ENCODE measurements at regions of chr6 and their contacts with region 1.

Region 1: DNA sequence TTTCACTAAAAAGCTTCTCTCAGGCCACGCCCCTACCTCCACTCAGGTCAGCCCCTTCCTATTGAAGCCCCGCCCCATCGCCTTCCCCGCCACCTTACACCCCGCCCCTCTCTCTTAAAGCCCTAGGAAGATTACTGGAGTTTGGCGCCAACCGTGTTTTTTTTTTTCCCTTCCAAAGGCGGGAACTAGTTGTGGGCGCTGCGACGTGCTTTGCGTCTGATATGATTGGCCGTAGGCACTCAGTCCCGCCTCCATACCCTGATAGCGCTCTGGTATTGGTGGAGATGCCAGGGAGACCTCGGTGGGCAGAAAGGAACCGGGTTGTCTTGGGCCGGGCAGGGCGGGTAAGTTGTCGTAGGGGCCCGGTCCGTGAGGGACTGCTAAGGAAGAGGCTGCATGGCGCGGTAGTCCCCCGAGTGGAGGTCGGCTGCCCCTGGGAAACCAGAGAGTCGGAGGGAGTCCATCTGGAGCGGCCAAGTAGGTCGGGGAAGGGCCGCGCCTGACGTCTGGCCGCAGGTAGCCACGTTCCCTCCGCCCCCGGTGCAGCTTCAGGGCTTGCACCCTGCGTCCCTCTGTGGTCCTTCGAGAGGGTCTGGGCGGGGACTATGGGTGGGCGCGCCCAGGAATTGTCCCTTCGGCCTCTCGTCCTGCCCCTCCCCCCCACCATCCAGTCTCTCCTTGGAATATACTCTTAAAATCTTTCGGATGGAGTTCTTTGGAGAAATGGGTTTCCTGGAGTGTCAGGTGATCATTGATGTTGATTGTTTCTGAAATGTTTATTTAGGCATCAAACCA is at the start of gene CASP8AP2:
- DNase-seq: peak; percentile 98
- H3K4me3 Mint-ChIP-seq: peak within 1 kb of the TSS; percentile 99
- H3K27ac Mint-ChIP-seq: peak within 1 kb of the TSS; percentile 96
- H3K4me1 Mint-ChIP-seq: peaks cover 33% of the 10 kb centered on the region
- H3K27me3 Mint-ChIP-seq: no peaks in the 10 kb centered on the region
- total RNA-seq, gene CASP8AP2: 27.4 to 30.2 TPM

Region 2: GRCh38 chr6:88963139-88964090 is 866.4 kb before region 1 on chr6 and contains the start of gene RNGTT:
- CTCF ChIA-PET with region 1: no interaction called
- intact Hi-C with region 1: loop called (anchors 10 kb)
- DNase-seq: peak; percentile 99
- H3K4me3 Mint-ChIP-seq: peak within 1 kb of the TSS; percentile 99
- H3K27ac Mint-ChIP-seq: peak within 1 kb of the TSS; percentile 87
- H3K4me1 Mint-ChIP-seq: peaks cover 34% of the 10 kb centered on the region
- H3K27me3 Mint-ChIP-seq: no peaks in the 10 kb centered on the region
- total RNA-seq, gene RNGTT: 21.7 to 23.5 TPM

Region 3: GRCh38 chr6:89360415-89360999 is 469.3 kb before region 1 on chr6:
- CTCF ChIA-PET with region 1: no interaction called
- intact Hi-C with region 1: loop called (anchors 2 kb)
- DNase-seq: no peak
- H3K4me3 Mint-ChIP-seq: no peak overlapping the region
- H3K27ac Mint-ChIP-seq: peak overlapping the region; percentile 67
- H3K4me1 Mint-ChIP-seq: peaks cover 61% of the 10 kb centered on the region
- H3K27me3 Mint-ChIP-seq: no peaks in the 10 kb centered on the region

Region 4: DNA sequence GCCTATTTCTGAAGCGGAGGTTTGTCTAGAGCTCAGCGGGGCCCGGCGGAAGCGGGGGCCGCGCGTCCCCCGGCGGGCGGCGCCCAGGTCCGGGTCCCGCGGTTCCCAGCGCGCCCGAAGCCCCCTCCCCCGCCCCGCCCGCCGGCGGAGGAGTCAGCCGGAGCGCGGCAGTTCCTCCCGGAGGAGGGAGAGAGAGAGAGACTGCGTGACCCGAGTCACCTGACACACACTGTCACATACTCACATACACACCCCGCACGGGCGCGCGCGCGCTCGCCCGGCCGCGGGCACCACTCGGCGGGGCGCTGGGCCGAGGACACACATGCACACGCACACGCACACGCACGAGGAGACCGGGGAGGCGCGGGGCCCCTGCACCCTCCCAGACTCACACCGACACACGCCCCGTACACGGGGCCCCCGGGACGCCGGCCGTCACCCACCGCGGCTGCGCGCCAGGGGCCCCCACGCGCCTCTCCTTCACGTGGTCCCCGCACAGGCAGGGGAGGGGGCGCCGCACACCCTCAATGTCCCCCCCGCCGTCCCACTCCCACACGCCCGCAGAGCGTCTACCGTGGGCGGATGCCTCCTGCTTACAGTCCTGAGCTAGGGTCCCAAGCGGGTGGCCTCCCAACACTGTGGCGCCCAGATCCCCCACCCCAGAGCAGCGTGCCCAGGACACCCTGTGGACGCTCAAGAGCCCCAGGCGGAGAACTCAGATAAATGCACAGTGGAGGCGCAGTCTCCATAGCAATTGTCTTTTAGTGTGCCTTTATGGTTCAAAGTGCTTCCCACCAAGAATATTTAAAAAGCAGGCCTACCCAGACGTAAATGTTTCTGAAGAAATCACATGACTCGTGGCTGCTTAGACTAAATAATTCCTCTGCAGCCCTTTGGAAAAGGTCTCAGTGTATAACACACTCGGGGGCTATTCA is 417.4 kb before region 1 on chr6 and contains the start of gene RRAGD:
- CTCF ChIA-PET with region 1: no interaction called
- intact Hi-C with region 1: loop called (anchors 5 kb)
- DNase-seq: peak; percentile 67
- H3K4me3 Mint-ChIP-seq: peak within 1 kb of the TSS; percentile 91
- H3K27ac Mint-ChIP-seq: peak within 1 kb of the TSS; percentile 31
- H3K4me1 Mint-ChIP-seq: peaks cover 23% of the 10 kb centered on the region
- H3K27me3 Mint-ChIP-seq: peaks cover 4% of the 10 kb centered on the region
- total RNA-seq, gene RRAGD: 11.3 to 13.2 TPM

Region 5: GRCh38 chr6:89527634-89528033 is 302.2 kb before region 1 on chr6:
- CTCF ChIA-PET with region 1: no interaction called
- intact Hi-C with region 1: no loop called
- DNase-seq: no peak
- H3K4me3 Mint-ChIP-seq: no peak overlapping the region
- H3K27ac Mint-ChIP-seq: no peak overlapping the region
- H3K4me1 Mint-ChIP-seq: no peaks in the 10 kb centered on the region
- H3K27me3 Mint-ChIP-seq: no peaks in the 10 kb centered on the region

Region 6: GRCh38 chr6:89819336-89820130 is 10.3 kb before region 1 on chr6 and contains the start of gene MDN1:
- CTCF ChIA-PET with region 1: interaction called, 8 read pairs
- intact Hi-C with region 1: loop called (anchors 1 kb)
- DNase-seq: peak; percentile 94
- H3K4me3 Mint-ChIP-seq: peak within 1 kb of the TSS; percentile 82
- H3K27ac Mint-ChIP-seq: peak within 1 kb of the TSS; percentile 88
- H3K4me1 Mint-ChIP-seq: peaks cover 36% of the 10 kb centered on the region
- H3K27me3 Mint-ChIP-seq: no peaks in the 10 kb centered on the region
- total RNA-seq, gene MDN1: 42.1 to 52.1 TPM

Region 7: GRCh38 chr6:90179190-90180169 is 349.7 kb after region 1 on chr6:
- CTCF ChIA-PET with region 1: no interaction called
- intact Hi-C with region 1: loop called (anchors 5 kb)
- DNase-seq: peak; percentile 56
- H3K4me3 Mint-ChIP-seq: no peak overlapping the region
- H3K27ac Mint-ChIP-seq: peak overlapping the region; percentile 85
- H3K4me1 Mint-ChIP-seq: peaks cover 81% of the 10 kb centered on the region
- H3K27me3 Mint-ChIP-seq: no peaks in the 10 kb centered on the region

Region 8: DNA sequence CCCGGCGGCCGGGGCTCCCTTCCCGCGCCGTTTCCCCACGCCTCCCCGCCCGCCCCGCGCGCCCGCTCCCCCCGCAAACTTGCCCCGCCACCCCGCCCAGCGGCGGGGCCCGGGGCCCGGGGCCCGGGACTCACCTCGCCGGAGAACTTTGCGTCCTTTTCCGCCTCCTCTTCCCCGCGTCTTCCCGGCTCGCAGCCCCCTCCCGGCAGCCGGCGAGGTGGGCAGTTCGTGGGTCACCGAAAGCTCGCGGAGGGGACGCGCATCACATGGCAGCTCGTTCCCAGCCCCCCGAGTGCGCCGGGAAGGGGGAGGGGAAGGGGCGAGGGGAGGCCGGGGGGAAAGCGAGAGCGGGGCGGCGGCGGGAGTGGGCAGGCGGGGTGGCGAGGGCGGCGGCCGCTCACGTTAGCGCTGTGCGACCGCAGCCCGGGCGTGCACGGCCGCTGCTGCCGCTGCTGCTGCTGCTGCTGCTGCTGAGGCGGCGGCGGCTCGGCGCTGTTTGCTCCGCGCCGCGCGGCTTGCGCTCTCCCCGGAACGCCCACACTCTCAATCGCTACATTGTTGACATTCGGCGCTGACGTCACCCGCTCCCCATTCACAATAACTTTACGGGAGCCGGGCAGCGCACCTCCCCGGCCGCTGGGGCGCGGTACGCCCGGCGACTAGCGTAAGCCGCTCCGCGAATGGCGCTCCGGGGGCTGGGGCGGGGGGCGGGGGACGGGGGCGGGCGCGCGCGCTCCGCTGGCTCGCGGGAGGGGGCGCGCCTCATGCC is 466.7 kb after region 1 on chr6 and contains the start of gene BACH2:
- CTCF ChIA-PET with region 1: no interaction called
- intact Hi-C with region 1: loop called (anchors 10 kb)
- DNase-seq: peak; percentile 99
- H3K4me3 Mint-ChIP-seq: peak within 1 kb of the TSS; percentile 86
- H3K27ac Mint-ChIP-seq: peak within 1 kb of the TSS; percentile 97
- H3K4me1 Mint-ChIP-seq: peaks cover 41% of the 10 kb centered on the region
- H3K27me3 Mint-ChIP-seq: peaks cover 2% of the 10 kb centered on the region
- total RNA-seq, gene BACH2: 75.1 to 77.9 TPM